ENCODE measurements at regions of chr1 and their contacts with region 1.

Region 1: DNA sequence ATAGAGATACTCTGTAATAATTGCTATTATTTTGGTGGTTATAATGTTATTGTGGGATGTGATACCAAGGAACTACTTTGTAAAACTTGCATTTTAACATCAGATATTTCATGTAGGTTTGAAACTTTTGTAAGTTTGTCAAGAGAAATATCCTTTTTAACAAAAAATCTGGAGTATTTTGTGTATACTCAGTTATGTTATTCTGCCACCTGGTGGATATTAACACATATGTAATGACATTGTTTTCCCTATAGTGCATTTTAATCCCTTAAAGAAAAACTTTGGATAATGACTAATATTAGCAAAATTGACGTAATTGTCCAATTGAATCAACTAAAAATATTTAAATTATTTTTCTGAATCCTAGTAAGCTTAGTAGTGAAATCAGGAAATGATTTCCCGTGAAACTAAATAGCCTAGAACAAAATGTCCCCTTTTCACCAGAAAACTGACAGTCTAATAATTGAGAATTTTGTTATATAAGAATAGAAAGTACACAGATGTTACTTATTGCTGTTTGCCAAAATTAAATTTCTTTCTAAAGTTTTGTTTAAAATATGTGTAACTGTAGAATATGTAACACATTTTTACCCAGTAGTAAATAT is 39.6 kb downstream of the KCTD3 start:
- DNase-seq: no peak
- H3K4me3 ChIP-seq: no peak overlapping the region
- H3K27ac ChIP-seq: no peak overlapping the region
- H3K4me1 ChIP-seq: no peaks in the 10 kb centered on the region; the same call in 1 of the 2 replicates
- H3K27me3 ChIP-seq: no peaks in the 10 kb centered on the region
- CTCF ChIP-seq: peak; percentile 80

Region 2: GRCh38 chr1:214660862-214661261 is 945.8 kb before region 1 on chr1:
- CTCF ChIA-PET with region 1: no interaction called
- POLR2A ChIA-PET with region 1: no interaction called
- intact Hi-C with region 1: loop called (anchors 10 kb)
- DNase-seq: no peak
- H3K4me3 ChIP-seq: no peak overlapping the region
- H3K27ac ChIP-seq: no peak overlapping the region
- H3K4me1 ChIP-seq: no peaks in the 10 kb centered on the region
- H3K27me3 ChIP-seq: no peaks in the 10 kb centered on the region
- CTCF ChIP-seq: peak; percentile 26; the same call in 1 of the 2 replicates

Region 3: GRCh38 chr1:215146341-215146826 is 460.3 kb before region 1 on chr1:
- CTCF ChIA-PET with region 1: no interaction called
- POLR2A ChIA-PET with region 1: no interaction called
- intact Hi-C with region 1: loop called (anchors 5 kb)
- DNase-seq: peak; percentile 19 to 57
- H3K4me3 ChIP-seq: no peak overlapping the region
- H3K27ac ChIP-seq: no peak overlapping the region
- H3K4me1 ChIP-seq: no peaks in the 10 kb centered on the region; the same call in 1 of the 2 replicates
- H3K27me3 ChIP-seq: no peaks in the 10 kb centered on the region
- CTCF ChIP-seq: peak; percentile 67

Region 4: GRCh38 chr1:215526553-215527151 is 80.0 kb before region 1 on chr1:
- CTCF ChIA-PET with region 1: no interaction called
- POLR2A ChIA-PET with region 1: no interaction called
- intact Hi-C with region 1: loop called (anchors 2 kb)
- DNase-seq: no peak
- H3K4me3 ChIP-seq: no peak overlapping the region
- H3K27ac ChIP-seq: no peak overlapping the region
- H3K4me1 ChIP-seq: no peaks in the 10 kb centered on the region
- H3K27me3 ChIP-seq: no peaks in the 10 kb centered on the region
- CTCF ChIP-seq: peak; percentile 90

Region 5: GRCh38 chr1:215566556-215567490 is 39.8 kb before region 1 on chr1 and contains the start of gene KCTD3:
- CTCF ChIA-PET with region 1: interaction called, 3 read pairs
- POLR2A ChIA-PET with region 1: no interaction called
- intact Hi-C with region 1: loop called (anchors 5 kb)
- DNase-seq: peak; percentile 57 to 77
- H3K4me3 ChIP-seq: peak within 1 kb of the TSS; percentile 68
- H3K27ac ChIP-seq: peak within 1 kb of the TSS; percentile 75
- H3K4me1 ChIP-seq: peaks cover 37% of the 10 kb centered on the region
- H3K27me3 ChIP-seq: no peaks in the 10 kb centered on the region
- CTCF ChIP-seq: no peak
- total RNA-seq, gene KCTD3: 46.4 and 53.6 TPM in 2 replicates

Region 6: GRCh38 chr1:215583185-215583749 is 23.4 kb before region 1 on chr1:
- CTCF ChIA-PET with region 1: no interaction called
- POLR2A ChIA-PET with region 1: interaction called, 11 read pairs
- intact Hi-C with region 1: no loop called
- DNase-seq: peak; percentile 69 to 93
- H3K4me3 ChIP-seq: peak overlapping the region; percentile 49
- H3K27ac ChIP-seq: peak overlapping the region; percentile 91
- H3K4me1 ChIP-seq: peaks cover 46% of the 10 kb centered on the region
- H3K27me3 ChIP-seq: no peaks in the 10 kb centered on the region
- CTCF ChIP-seq: no peak